ENCODE measurements at regions of chr12 and their contacts with region 1.

Region 1: GRCh38 chr12:110937104-110937641 is 16.8 kb upstream of the MYL2 start:
- DNase-seq: peak; percentile 33
- H3K4me3 ChIP-seq: no peak overlapping the region
- H3K27ac ChIP-seq: no peak overlapping the region
- H3K4me1 ChIP-seq: peaks cover 20% of the 10 kb centered on the region
- H3K27me3 ChIP-seq: no peaks in the 10 kb centered on the region
- CTCF ChIP-seq: peak; percentile 94 to 96

Region 2: DNA sequence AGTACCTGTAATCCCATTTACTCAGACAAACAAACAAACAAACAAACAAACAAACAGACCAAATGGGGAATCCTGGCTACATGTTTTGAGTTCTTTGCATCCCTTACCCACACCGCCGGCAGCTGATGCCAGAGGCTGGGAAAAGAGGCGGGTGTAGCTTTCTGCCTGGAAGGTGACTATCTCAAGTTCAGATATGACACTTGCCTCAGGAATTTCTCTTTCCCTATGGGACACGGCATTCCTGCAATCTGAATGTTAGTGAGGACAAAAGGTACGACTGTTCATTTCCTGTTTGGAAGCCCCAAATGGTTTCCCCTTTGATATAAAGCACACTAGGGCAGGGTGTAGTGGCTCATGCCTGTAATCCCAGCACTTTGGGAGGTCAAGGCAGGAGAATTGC is 19.7 kb before region 1 on chr12:
- CTCF ChIA-PET with region 1: no interaction called
- dilution Hi-C with region 1: no loop called
- in situ Hi-C with region 1: no loop called
- intact Hi-C with region 1: loop called (anchors 1 kb)
- DNase-seq: peak; percentile 73
- H3K4me3 ChIP-seq: no peak overlapping the region
- H3K27ac ChIP-seq: peak overlapping the region; percentile 58
- H3K4me1 ChIP-seq: peaks cover 18% of the 10 kb centered on the region
- H3K27me3 ChIP-seq: no peaks in the 10 kb centered on the region
- CTCF ChIP-seq: no peak

Region 3: DNA sequence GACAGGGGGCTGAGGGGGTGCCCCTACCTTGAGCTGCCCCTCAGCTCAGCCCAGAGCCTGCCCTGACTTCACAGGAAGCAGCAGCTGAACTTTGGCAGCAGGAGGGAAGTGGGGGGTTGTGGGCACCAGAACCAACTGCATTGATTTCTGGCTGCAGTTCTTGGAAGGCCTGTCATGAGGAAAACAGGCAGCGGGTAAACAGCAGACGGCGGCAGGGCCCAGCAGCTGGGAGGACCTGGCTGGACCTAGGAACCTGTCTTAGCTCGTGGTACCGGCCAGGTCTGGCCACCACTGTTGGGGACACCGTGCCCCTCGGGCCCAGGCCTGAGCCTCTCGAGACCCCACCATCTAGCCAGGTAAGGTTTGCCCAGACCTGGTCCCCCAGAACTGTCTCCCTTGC is 137.4 kb after region 1 on chr12:
- CTCF ChIA-PET with region 1: no interaction called
- dilution Hi-C with region 1: no loop called
- in situ Hi-C with region 1: no loop called
- intact Hi-C with region 1: no loop called
- DNase-seq: no peak
- H3K4me3 ChIP-seq: no peak overlapping the region
- H3K27ac ChIP-seq: no peak overlapping the region
- H3K4me1 ChIP-seq: no peaks in the 10 kb centered on the region
- H3K27me3 ChIP-seq: peaks cover 2% of the 10 kb centered on the region
- CTCF ChIP-seq: no peak

Region 4: DNA sequence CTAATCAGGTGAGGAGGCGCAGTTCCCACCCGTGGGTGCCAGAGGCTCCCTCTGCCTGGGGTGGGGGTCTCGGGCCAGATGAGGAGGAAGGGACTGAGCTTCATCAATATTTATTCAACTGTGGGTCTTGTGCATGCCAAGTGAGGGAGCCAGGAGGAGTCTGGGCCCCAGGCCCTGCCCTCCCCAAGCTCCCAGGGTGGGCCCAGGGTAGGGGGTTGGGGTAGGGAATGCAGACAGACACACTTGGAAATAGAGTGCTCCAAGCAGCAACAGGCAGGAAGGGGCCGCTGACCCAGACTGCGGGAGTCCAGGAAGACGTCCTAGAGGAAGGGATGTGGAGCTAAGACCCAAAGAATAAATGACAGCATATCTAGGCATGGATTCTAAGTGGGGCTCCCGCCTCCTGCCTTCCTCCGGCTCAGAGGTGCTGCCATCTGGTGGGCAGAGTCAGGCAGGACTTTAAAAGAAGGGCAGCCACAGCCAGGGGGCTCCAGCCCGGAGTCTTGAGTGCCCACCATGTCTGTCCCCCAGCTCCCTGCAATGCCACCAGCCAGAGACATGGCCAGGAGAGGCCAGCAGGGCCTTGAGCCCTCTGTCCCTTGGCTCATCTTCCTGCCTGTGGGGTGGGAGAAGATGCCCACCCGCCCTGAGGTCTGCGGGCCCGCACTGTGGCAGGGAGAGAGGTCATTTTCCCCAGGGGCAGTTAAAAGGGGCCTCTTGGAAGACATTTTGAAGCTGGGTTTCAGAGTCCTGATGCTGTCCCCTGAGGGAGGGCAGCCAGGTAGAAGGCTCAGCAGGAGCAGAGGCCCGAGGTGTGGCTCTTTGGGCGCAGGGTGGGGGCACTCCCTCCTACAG is 361.6 kb after region 1 on chr12:
- CTCF ChIA-PET with region 1: no interaction called
- dilution Hi-C with region 1: no loop called
- in situ Hi-C with region 1: no loop called
- intact Hi-C with region 1: loop called (anchors 2 kb)
- DNase-seq: peak; percentile 22
- H3K4me3 ChIP-seq: no peak overlapping the region
- H3K27ac ChIP-seq: no peak overlapping the region
- H3K4me1 ChIP-seq: no peaks in the 10 kb centered on the region
- H3K27me3 ChIP-seq: no peaks in the 10 kb centered on the region
- CTCF ChIP-seq: peak; percentile 72 to 85

Region 5: GRCh38 chr12:111313833-111314259 is 376.7 kb after region 1 on chr12:
- CTCF ChIA-PET with region 1: no interaction called
- dilution Hi-C with region 1: no loop called
- in situ Hi-C with region 1: no loop called
- intact Hi-C with region 1: loop called (anchors 1 kb)
- DNase-seq: peak; percentile 36
- H3K4me3 ChIP-seq: no peak overlapping the region
- H3K27ac ChIP-seq: no peak overlapping the region
- H3K4me1 ChIP-seq: no peaks in the 10 kb centered on the region
- H3K27me3 ChIP-seq: peaks cover 1% of the 10 kb centered on the region
- CTCF ChIP-seq: peak; percentile 85 to 97